ENCODE measurements at regions of chr1 and their contacts with region 1.

Region 1: DNA sequence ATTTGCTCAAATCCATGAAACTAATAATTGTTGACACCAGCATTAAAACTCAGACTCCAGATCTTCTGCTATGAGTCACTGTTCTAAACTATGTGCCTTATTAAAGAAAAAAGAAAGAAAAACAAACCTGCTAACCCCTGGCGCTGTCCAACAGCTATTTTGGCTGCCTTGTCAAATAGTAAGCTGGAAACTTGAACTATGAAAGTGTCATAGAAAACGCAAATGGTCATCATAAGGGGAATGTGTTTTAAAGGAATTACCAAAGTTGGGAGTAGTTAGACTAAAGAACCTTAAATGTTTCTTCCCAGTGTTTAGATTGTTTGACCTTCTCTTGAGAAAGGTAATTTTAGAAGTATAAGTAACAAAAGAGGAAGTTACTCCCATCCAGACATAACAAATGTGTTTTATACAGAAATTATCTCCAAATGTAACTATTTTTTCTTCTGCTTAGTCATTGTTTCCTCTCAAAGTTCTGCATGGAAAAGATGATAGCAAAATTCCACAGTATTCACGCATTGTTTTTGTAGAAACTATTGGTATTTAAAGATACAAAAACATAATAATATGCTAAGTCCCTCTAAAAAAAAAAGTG is 272.4 kb downstream of the TPR start:
- DNase-seq: no peak
- H3K4me3 ChIP-seq: no peak overlapping the region
- H3K27ac ChIP-seq: no peak overlapping the region
- H3K4me1 ChIP-seq: no peaks in the 10 kb centered on the region
- H3K27me3 ChIP-seq: no peaks in the 10 kb centered on the region
- CTCF ChIP-seq: no peak
- EP300 ChIP-seq: no peak
- POLR2A ChIP-seq: no peak

Region 2: GRCh38 chr1:186129758-186130157 is 27.1 kb after region 1 on chr1:
- in situ Hi-C with region 1: no loop called
- intact Hi-C with region 1: loop called (anchors 1 kb)
- DNase-seq: no peak
- H3K4me3 ChIP-seq: no peak overlapping the region
- H3K27ac ChIP-seq: no peak overlapping the region
- H3K4me1 ChIP-seq: no peaks in the 10 kb centered on the region
- H3K27me3 ChIP-seq: no peaks in the 10 kb centered on the region
- CTCF ChIP-seq: no peak
- EP300 ChIP-seq: no peak
- POLR2A ChIP-seq: no peak